Activated CD4-positive, alpha-beta memory T cell treated with anti-CD3 and anti-CD28 coated beads, Interleukin-2, amount 10 ng/mL, durations not matched to agents 7 days and 5 days (primary cell): ENCODE measurements at regions of chr11 and their contacts with region 1.

Region 1: DNA sequence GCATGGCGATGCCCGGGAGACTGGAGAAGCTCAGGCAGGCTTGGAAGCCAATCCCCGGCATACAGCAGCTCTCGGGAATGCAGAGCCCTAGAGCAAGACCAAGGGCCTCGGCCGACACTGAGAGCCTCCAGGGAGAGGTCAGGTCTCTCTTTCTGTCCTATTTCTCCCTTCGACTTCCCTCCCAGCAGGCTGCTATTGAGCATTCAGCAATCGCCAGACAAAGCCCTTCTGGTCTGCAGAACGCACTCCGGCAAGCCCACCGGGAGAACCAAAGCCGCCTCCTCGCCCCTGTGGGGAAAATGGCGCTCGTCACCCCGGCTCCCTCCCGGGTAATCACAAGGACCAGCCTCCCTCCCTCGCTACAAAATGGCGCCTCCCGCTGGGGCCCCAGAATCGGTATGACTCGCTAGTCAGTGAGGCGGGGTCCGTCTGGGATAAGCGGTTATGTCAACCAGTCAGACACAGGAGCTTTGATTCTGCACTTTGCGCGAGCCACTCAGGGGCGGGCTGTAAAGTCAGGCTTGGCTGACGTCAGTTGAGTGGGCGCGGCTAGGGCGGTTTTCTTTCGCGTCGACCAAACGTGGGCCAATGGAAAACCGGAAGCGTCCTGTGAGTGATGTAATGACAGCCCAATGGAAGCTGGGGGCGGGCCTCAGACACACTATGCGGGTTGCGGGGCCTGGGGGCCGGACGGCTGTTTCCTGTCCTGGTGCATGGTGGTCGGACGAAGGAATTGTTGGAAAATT is at the start of gene ZNF143:
- DNase-seq: peak; percentile 100
- H3K4me3 Mint-ChIP-seq: peak within 1 kb of the TSS; percentile 95
- H3K27ac Mint-ChIP-seq: peak within 1 kb of the TSS; percentile 95
- H3K4me1 Mint-ChIP-seq: peaks cover 28% of the 10 kb centered on the region
- H3K27me3 Mint-ChIP-seq: no peaks in the 10 kb centered on the region
- total RNA-seq, gene ZNF143: 43.5 to 45.5 TPM

Region 2: DNA sequence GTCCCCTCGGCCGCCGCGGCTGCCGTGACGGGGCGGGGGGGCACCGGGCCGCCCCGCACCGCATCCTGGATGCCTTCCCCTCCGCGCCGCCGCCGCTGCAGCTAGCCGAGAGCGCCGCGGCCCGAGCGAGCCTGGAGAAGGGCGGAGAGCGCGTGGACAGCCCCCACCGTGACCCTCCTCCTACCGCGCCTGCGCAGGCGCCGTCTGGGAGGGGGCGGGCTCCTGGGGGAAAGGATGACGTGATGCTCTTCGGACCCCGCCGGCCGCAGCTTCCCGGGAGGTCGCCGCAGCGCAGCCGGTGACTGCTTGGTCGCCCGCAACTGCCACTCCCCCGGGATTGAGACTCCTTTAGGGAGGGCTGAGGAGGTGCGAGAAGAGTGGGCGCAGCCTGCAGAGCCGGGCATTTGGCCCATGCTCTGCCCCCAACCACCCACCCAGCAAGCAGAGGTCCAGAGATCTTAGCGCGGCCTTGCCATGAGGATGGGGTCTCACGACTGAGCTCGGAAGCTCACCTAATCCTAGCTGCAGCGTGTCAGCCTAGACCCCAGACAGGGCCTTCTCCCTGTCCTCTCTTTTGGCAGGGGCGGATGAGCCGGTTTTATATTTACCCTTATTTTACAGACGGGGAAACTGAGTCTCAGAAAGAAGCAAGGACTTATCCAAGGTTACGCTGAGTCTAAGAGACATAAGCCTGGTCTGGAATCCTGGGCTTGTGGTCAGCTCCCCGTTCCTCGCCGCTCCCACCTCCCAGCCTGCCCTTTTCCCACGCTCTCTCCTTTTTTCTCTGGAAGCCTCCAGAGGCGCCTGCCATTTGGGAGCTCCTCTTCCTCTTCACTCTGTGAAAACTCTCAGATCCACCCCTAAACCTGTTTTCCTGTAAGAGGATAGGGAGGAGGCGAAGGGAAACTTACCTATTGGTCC is 195.0 kb before region 1 on chr11 and contains the start of gene DENND5A:
- CTCF ChIA-PET with region 1: interaction called, 3 read pairs
- POLR2A ChIA-PET with region 1: interaction called, 17 read pairs
- DNase-seq: peak; percentile 49
- H3K4me3 Mint-ChIP-seq: peak within 1 kb of the TSS; percentile 80
- H3K27ac Mint-ChIP-seq: peak within 1 kb of the TSS; percentile 68
- H3K4me1 Mint-ChIP-seq: peaks cover 30% of the 10 kb centered on the region
- H3K27me3 Mint-ChIP-seq: peaks cover 58% of the 10 kb centered on the region
- total RNA-seq, gene DENND5A: 11.6 to 13.7 TPM

Region 3: DNA sequence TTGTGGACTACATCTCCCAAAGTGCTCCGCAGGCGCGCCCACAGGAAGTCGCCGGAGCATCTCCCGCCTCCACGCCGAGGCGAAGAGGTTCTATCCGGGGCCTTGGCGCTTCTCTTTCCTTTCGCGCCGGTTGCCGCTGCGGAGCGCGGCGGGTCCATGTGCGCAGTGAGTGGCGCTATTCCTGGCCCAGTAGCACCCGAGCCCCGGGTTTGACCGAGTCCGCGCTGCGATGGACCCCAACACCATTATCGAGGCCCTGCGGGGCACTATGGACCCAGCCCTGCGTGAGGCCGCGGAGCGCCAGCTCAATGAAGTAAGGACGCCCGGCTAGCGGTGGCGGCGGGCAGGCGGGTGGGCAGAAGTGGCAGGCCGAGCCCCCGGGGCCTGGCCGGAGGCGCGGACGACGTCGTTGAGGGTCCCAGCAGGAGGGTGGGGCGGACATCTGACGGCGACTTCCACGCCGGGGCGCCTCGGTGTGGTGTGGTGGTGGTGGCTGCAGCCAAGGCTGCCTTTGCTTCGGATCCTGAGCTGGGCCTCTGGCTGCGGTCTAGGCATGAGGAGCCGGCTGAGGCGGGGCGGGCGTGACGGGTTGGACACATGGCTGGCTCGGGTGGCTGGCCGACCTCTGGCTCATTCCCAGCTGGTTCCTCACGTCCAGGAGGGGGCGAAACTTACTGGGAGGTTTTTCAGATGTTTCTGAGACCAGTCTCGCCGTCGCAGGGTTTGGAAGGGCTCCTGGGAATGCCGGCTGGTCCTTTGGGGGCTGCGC is 75.8 kb before region 1 on chr11 and contains the start of gene IPO7:
- CTCF ChIA-PET with region 1: interaction called, 6 read pairs
- POLR2A ChIA-PET with region 1: interaction called, 72 read pairs
- DNase-seq: peak; percentile 92
- H3K4me3 Mint-ChIP-seq: peak within 1 kb of the TSS; percentile 85
- H3K27ac Mint-ChIP-seq: peak within 1 kb of the TSS; percentile 87
- H3K4me1 Mint-ChIP-seq: peaks cover 32% of the 10 kb centered on the region
- H3K27me3 Mint-ChIP-seq: no peaks in the 10 kb centered on the region
- total RNA-seq, gene IPO7: 87.4 to 95.7 TPM

Region 4: DNA sequence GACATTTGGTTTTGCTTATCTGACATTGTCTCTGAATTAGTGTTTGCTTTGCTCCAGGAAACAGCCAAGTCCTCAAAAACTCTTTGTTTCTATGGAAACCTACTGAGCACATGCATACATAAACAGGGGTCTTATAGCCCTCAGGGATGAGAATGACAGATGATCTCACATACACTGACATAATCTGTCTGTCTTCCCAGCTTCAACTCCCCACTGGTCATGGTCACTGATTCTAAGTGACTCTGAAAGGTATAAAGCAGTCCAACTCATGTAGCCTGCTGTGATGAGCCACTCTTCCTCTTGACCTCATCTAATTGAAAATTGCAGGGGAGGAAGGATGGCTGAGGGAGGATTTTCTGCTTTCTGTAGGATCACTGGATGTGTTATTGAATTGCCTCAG is 12.9 kb after region 1 on chr11:
- CTCF ChIA-PET with region 1: no interaction called
- POLR2A ChIA-PET with region 1: interaction called, 19 read pairs
- DNase-seq: no peak
- H3K4me3 Mint-ChIP-seq: no peak overlapping the region
- H3K27ac Mint-ChIP-seq: no peak overlapping the region
- H3K4me1 Mint-ChIP-seq: peaks cover 6% of the 10 kb centered on the region
- H3K27me3 Mint-ChIP-seq: no peaks in the 10 kb centered on the region

Region 5: GRCh38 chr11:9590717-9591116 is 130.2 kb after region 1 on chr11:
- CTCF ChIA-PET with region 1: no interaction called
- POLR2A ChIA-PET with region 1: no interaction called
- DNase-seq: no peak
- H3K4me3 Mint-ChIP-seq: no peak overlapping the region
- H3K27ac Mint-ChIP-seq: no peak overlapping the region
- H3K4me1 Mint-ChIP-seq: peaks cover 12% of the 10 kb centered on the region
- H3K27me3 Mint-ChIP-seq: no peaks in the 10 kb centered on the region

Region 6: GRCh38 chr11:9601037-9601875 is 140.8 kb after region 1 on chr11:
- CTCF ChIA-PET with region 1: no interaction called
- POLR2A ChIA-PET with region 1: interaction called, 14 read pairs
- DNase-seq: peak; percentile 83
- H3K4me3 Mint-ChIP-seq: peak overlapping the region; percentile 49
- H3K27ac Mint-ChIP-seq: peak overlapping the region; percentile 59
- H3K4me1 Mint-ChIP-seq: peaks cover 25% of the 10 kb centered on the region
- H3K27me3 Mint-ChIP-seq: peaks cover 19% of the 10 kb centered on the region

Region 7: GRCh38 chr11:9681583-9682372 is 221.3 kb after region 1 on chr11:
- CTCF ChIA-PET with region 1: no interaction called
- POLR2A ChIA-PET with region 1: no interaction called
- DNase-seq: no peak
- H3K4me3 Mint-ChIP-seq: no peak overlapping the region
- H3K27ac Mint-ChIP-seq: no peak overlapping the region
- H3K4me1 Mint-ChIP-seq: no peaks in the 10 kb centered on the region
- H3K27me3 Mint-ChIP-seq: no peaks in the 10 kb centered on the region